Activated CD4-positive, alpha-beta memory T cell treated with anti-CD3 and anti-CD28 coated beads for 36 hours (primary cell): ENCODE measurements at regions of chr15 and their contacts with region 1.

Region 1: GRCh38 chr15:100721770-100722550 is 119.6 kb downstream of the ASB7 start:
- DNase-seq: no peak
- H3K4me3 Mint-ChIP-seq: no peak overlapping the region
- H3K27ac Mint-ChIP-seq: no peak overlapping the region
- H3K4me1 Mint-ChIP-seq: peaks cover 3% of the 10 kb centered on the region
- H3K27me3 Mint-ChIP-seq: peaks cover 10% of the 10 kb centered on the region

Region 2: GRCh38 chr15:100703032-100703578 is 18.9 kb before region 1 on chr15:
- CTCF ChIA-PET with region 1: no interaction called
- POLR2A ChIA-PET with region 1: no interaction called
- intact Hi-C with region 1: loop called (anchors 1 kb)
- DNase-seq: peak; percentile 78
- H3K4me3 Mint-ChIP-seq: no peak overlapping the region
- H3K27ac Mint-ChIP-seq: no peak overlapping the region
- H3K4me1 Mint-ChIP-seq: peaks cover 6% of the 10 kb centered on the region
- H3K27me3 Mint-ChIP-seq: peaks cover 19% of the 10 kb centered on the region